Cardiac septum (tissue), 1 donor: ENCODE measurements at regions of chr17 and their contacts with region 1.

Region 1: GRCh38 chr17:62085511-62086408 is 20.7 kb upstream of the MED13 start:
- DNase-seq: no peak

Region 2: GRCh38 chr17:62134397-62134796 is 48.6 kb after region 1 on chr17:
- intact Hi-C with region 1: loop called (anchors 10 kb)
- DNase-seq: no peak